HepG2 (cell line): ENCODE measurements at regions of chr1 and their contacts with region 1.

Region 1: DNA sequence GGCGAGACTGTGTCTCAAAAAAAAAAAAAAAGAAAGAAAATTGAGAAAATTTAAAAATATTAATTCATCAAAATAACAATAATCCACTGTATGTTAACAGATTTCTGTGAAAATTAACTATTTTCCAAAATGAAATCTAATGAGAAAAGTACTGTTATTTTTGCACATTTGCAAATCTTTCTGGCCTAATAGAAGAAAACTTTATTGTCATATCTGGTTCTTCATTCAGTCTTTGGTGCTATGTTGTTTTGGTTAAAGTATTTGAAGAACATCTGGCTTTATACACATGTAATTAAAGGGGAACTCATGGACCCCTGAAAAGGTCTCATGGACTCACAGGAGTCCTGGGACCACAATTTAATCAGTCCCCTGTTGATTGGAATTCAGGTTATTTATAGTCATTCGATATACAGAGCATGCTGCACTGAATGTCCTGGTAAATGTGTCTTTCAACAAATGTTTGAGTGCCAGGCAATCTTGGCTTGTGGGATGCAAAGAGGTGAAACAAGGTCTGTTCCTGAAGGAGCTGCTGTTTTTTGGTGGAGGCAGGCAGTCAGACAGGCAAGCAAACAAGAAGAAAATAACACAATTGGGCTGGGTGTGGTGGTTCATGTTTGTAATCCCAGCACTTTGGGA is 9.0 kb downstream of the AK4 start:
- DNase-seq: no peak
- ATAC-seq: no peak
- H3K4me3 ChIP-seq: no peak overlapping the region
- H3K27ac ChIP-seq: peak overlapping the region; percentile 97
- H3K4me1 ChIP-seq: peaks cover 97% of the 10 kb centered on the region
- H3K27me3 ChIP-seq: no peaks in the 10 kb centered on the region
- CTCF ChIP-seq: no peak
- EP300 ChIP-seq: no peak
- POLR2A ChIP-seq: no peak
- RAD21 ChIP-seq: no peak

Region 2: DNA sequence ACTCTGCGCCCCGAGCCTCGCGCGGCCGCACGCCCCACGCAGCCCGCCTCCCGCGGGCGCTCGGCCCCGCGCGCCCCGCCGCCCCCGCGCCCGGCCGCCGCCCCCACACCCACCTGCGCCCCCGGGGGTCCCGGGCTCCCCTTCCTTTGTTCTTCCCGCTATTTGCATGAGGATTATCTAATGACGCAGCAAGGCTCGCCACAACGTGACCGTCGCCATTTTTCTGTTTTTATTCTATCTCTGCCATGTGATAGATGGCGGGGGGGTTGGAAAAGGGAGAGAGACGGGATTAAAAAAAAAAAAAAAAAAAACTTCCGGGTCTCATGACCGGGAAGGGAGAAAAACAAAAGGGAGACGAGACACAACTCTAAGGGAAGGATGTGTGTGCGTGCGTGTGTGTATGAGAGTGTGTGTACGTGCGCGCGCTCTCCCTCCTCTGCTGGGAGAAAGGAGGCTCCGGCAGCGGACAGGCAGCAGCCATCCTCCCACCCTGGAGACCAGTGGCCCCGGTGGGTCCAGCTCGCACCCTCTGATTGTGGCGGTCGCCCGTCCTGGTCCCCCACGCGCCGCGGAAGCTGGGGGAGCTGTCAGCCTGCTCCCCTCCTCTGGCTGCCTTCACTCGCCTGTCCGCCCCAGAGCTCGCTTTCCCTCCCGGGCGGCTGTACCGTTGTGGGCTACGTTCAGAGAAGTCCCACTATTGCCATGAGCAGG is 89.4 kb before region 1 on chr1:
- CTCF ChIA-PET with region 1: no interaction called
- POLR2A ChIA-PET with region 1: no interaction called
- in situ Hi-C with region 1: no loop called
- intact Hi-C with region 1: loop called (anchors 5 kb)
- DNase-seq: peak; percentile 29
- ATAC-seq: peak; percentile 49
- H3K4me3 ChIP-seq: peak overlapping the region; percentile 64 to 84 (median 74)
- H3K27ac ChIP-seq: peak overlapping the region; percentile 26
- H3K4me1 ChIP-seq: peaks cover 14% of the 10 kb centered on the region; the same call in 1 of the 2 replicates
- H3K27me3 ChIP-seq: peaks cover 0 to 8% of the 10 kb centered on the region in 2 experiments; a peak in 2 of 5 replicates
- CTCF ChIP-seq: no peak
- EP300 ChIP-seq: no peak
- POLR2A ChIP-seq: peak in 1 of 2 experiments; percentile 54; a peak in 2 of 4 replicates
- RAD21 ChIP-seq: no peak

Region 3: GRCh38 chr1:65174585-65174984 is 17.6 kb after region 1 on chr1:
- CTCF ChIA-PET with region 1: no interaction called
- POLR2A ChIA-PET with region 1: interaction called, 33 read pairs
- in situ Hi-C with region 1: no loop called
- intact Hi-C with region 1: loop called (anchors 2 kb)
- DNase-seq: no peak
- ATAC-seq: no peak
- H3K4me3 ChIP-seq: no peak overlapping the region
- H3K27ac ChIP-seq: no peak overlapping the region
- H3K4me1 ChIP-seq: peaks cover 85% of the 10 kb centered on the region
- H3K27me3 ChIP-seq: no peaks in the 10 kb centered on the region
- CTCF ChIP-seq: no peak
- EP300 ChIP-seq: no peak
- POLR2A ChIP-seq: no peak
- RAD21 ChIP-seq: no peak